Activated CD4-positive, alpha-beta memory T cell treated with anti-CD3 and anti-CD28 coated beads for 36 hours (primary cell): ENCODE measurements at regions of chr13 and their contacts with region 1.

Region 1: DNA sequence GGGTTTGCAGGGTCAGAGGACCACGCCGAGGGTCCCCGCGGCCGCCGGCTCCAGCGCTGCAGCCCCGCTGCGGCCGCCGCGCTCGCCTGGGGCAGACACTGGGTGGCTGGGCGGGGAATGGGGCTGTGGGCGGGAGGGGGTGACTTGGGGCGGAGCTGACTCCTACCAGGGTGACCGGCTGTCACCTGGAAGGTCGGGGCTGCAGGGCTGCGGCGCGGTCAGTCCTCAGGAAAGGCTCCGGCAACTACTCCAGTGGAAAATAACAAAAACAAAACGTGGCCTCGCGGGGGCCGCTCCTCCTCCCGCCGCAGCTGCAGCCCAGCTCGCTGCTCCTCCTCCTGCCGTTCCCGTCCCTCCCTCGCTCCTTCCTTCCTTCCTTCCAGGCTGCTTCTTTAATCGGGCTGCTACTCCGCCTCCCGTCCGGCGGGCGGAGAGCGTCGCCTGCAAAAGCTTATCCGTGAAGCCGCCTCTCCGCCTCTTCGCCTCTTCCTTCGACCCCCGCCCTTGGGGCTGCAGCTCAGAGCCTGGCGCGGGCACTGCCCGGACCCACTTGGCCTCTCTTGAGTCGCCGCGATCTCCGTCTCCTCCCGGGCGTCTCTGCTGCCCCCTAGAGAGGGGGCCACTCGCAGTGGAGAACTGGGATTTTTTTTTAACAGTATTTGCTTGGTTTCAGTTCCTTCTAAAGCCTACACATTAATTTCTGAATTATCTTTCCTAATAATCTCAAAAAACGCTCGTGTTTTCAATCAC is at the start of gene TBC1D4:
- DNase-seq: peak; percentile 71
- H3K4me3 Mint-ChIP-seq: peak within 1 kb of the TSS; percentile 93
- H3K27ac Mint-ChIP-seq: no peak within 1 kb of the TSS
- H3K4me1 Mint-ChIP-seq: peaks cover 13% of the 10 kb centered on the region
- H3K27me3 Mint-ChIP-seq: peaks cover 62% of the 10 kb centered on the region
- total RNA-seq, gene TBC1D4: 13.0 to 14.8 TPM

Region 2: GRCh38 chr13:75326173-75327134 is 155.8 kb before region 1 on chr13:
- CTCF ChIA-PET with region 1: interaction called, 12 read pairs
- POLR2A ChIA-PET with region 1: interaction called, 3 read pairs
- intact Hi-C with region 1: loop called (anchors 1 kb)
- DNase-seq: peak; percentile 78
- H3K4me3 Mint-ChIP-seq: peak overlapping the region; percentile 89
- H3K27ac Mint-ChIP-seq: peak overlapping the region; percentile 95
- H3K4me1 Mint-ChIP-seq: peaks cover 35% of the 10 kb centered on the region
- H3K27me3 Mint-ChIP-seq: no peaks in the 10 kb centered on the region

Region 3: GRCh38 chr13:75372517-75372916 is 109.7 kb before region 1 on chr13:
- CTCF ChIA-PET with region 1: interaction called, 8 read pairs
- POLR2A ChIA-PET with region 1: no interaction called
- intact Hi-C with region 1: loop called (anchors 1 kb)
- DNase-seq: no peak
- H3K4me3 Mint-ChIP-seq: no peak overlapping the region
- H3K27ac Mint-ChIP-seq: no peak overlapping the region
- H3K4me1 Mint-ChIP-seq: peaks cover 3% of the 10 kb centered on the region
- H3K27me3 Mint-ChIP-seq: peaks cover 1% of the 10 kb centered on the region

Region 4: DNA sequence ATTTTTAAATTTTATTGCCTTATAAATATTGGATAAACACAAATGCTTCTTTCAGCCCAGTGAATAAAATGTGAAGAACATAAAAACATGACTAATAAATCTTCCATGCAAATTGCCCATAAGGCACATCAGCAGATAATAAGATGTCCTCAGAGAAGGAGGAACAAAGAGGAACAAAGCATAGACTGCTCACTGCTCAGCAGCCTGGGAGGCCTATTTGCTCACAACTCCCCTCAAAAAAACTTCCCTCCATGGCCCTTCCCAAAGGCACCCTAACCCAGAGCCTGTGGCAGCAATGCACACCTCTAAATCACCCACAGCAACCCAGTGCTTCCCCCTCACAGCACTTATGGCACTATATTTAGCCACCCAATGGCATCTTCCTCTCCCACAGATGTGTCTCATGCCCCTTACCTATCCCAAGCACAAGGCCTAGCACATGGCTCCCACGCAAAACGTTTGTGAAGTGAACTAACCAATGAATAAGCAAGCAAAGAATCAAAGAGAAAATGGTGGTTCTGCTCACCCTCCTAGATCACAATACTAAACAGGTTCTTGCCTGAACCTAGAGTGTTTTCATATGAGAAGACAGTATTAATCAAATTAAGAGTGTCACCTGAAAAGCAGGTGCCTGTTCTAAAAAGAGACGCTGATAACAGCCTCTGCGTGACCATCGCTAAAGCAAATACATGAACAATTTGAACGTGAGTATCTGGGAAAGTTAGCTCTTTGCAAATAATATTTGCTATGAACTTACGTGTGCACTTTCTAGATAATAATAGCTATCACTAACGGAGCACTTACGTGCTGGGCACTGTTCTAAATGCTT is 97.2 kb before region 1 on chr13:
- CTCF ChIA-PET with region 1: no interaction called
- POLR2A ChIA-PET with region 1: no interaction called
- intact Hi-C with region 1: loop called (anchors 5 kb)
- DNase-seq: no peak
- H3K4me3 Mint-ChIP-seq: no peak overlapping the region
- H3K27ac Mint-ChIP-seq: no peak overlapping the region
- H3K4me1 Mint-ChIP-seq: peaks cover 10% of the 10 kb centered on the region
- H3K27me3 Mint-ChIP-seq: no peaks in the 10 kb centered on the region

Region 5: GRCh38 chr13:75537401-75538365 is 55.4 kb after region 1 on chr13 and contains the start of gene COMMD6:
- CTCF ChIA-PET with region 1: interaction called, 5 read pairs
- POLR2A ChIA-PET with region 1: no interaction called
- intact Hi-C with region 1: loop called (anchors 2 kb)
- DNase-seq: peak; percentile 80
- H3K4me3 Mint-ChIP-seq: peak within 1 kb of the TSS; percentile 98
- H3K27ac Mint-ChIP-seq: peak within 1 kb of the TSS; percentile 85
- H3K4me1 Mint-ChIP-seq: peaks cover 22% of the 10 kb centered on the region
- H3K27me3 Mint-ChIP-seq: no peaks in the 10 kb centered on the region
- total RNA-seq, gene COMMD6: 130 to 136 TPM